CD14-positive monocyte (primary cell): ENCODE measurements at regions of chr6 and their contacts with region 1.

Region 1: GRCh38 chr6:31597006-31597405 is 4.2 kb upstream of the NCR3 start:
- DNase-seq: peak; percentile 55 to 66 (median 55)
- H3K4me3 ChIP-seq: no peak overlapping the region
- H3K4me3 Mint-ChIP-seq: no peak overlapping the region
- H3K27ac ChIP-seq: no peak overlapping the region
- H3K27ac Mint-ChIP-seq: peak overlapping the region in 1 of 7 donors; percentile 87
- H3K4me1 ChIP-seq: peaks cover 13 to 32% of the 10 kb centered on the region in 2 donors
- H3K4me1 Mint-ChIP-seq: peaks cover 33% of the 10 kb centered on the region
- H3K27me3 ChIP-seq: no peaks in the 10 kb centered on the region
- H3K27me3 Mint-ChIP-seq: peaks cover 0 to 7% (median under 1%) of the 10 kb centered on the region in 3 donors
- CTCF ChIP-seq: peak; percentile 74

Region 2: DNA sequence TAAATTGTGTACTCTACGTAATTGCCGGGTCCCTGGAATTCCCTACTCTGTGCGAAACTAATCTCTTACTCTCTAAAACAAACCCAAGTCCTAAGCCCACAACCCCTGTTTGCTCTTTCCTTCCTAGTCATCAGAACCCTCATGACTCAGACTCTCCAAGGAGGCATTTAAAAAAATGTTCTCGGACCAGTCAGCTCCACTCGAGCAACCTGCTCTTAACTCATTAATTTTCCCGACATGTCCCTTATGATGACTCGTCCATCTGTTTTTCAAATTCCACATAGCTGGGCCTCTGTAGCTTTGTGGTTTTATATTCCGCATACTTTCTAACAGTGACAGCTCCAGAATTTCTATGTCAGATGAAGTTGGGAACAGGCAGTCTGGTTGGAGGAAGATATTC is 589.3 kb before region 1 on chr6:
- intact Hi-C with region 1: no loop called
- DNase-seq: no peak
- H3K4me3 ChIP-seq: no peak overlapping the region
- H3K4me3 Mint-ChIP-seq: no peak overlapping the region
- H3K27ac ChIP-seq: no peak overlapping the region
- H3K27ac Mint-ChIP-seq: no peak overlapping the region
- H3K4me1 ChIP-seq: no peaks in the 10 kb centered on the region
- H3K4me1 Mint-ChIP-seq: no peaks in the 10 kb centered on the region
- H3K27me3 ChIP-seq: no peaks in the 10 kb centered on the region
- H3K27me3 Mint-ChIP-seq: peaks cover 2 to 14% (median 9%) of the 10 kb centered on the region in 3 donors
- CTCF ChIP-seq: no peak

Region 3: GRCh38 chr6:31403283-31403989 is 193.6 kb before region 1 on chr6 and contains the start of gene MICA:
- intact Hi-C with region 1: no loop called
- DNase-seq: peak; percentile 57 to 85 (median 85)
- H3K4me3 ChIP-seq: peak within 1 kb of the TSS; percentile 43 to 98 (median 57)
- H3K4me3 Mint-ChIP-seq: peak within 1 kb of the TSS; percentile 98 to 99
- H3K27ac ChIP-seq: peak within 1 kb of the TSS; percentile 7 to 54
- H3K27ac Mint-ChIP-seq: peak within 1 kb of the TSS; percentile 77 to 98 (median 87)
- H3K4me1 ChIP-seq: peaks cover 40 to 68% of the 10 kb centered on the region in 2 donors
- H3K4me1 Mint-ChIP-seq: peaks cover 73% of the 10 kb centered on the region
- H3K27me3 ChIP-seq: no peaks in the 10 kb centered on the region
- H3K27me3 Mint-ChIP-seq: peaks cover 0 to 5% (median 3%) of the 10 kb centered on the region in 3 donors
- CTCF ChIP-seq: peak; percentile 14
- polyA plus RNA-seq, gene MICA: 5.6 to 16.5 (median 6.9) TPM

Region 4: DNA sequence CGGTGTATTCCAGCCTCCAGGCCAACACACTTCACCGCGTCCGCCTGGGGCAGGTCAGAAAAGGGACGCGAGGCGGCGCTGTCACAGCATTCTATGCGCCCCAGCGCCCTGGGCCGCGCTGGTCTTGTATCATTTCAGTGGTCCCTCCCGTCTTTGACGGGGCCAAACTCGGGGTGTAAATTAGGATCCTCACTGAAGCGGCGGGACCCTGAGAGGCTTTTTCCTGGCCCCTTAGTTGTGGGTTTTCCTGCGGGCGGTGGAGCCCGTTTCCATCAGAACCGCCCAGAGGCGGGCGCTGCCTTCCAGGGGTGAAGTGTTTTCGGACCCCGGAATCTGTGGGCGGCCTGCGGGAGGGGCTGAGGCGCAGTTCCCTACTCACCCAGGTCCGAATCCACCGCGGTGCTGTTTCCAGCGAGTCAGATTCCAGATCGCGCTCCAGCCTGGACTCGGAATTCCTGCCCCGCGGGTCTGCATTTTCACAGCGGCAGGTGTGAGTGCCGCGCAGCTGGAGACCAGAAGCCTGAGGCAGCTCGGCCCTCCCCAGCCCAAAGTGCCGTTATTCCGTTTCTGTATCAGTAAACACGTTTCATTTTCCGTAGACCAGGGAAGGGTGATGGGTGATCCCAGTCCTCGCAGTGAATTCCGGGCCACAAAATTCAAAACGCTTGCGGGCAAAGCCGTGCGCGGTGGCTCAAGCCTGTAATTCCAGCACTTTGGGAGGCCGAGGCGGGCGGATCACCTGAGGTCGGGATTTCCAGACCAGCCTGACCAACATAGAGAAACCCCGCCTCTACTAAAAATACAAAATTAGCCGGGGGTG is 102.9 kb before region 1 on chr6:
- intact Hi-C with region 1: loop called in 1 of 2 experiments (anchors 5 kb)
- DNase-seq: peak; percentile 68 to 77 (median 77)
- H3K4me3 ChIP-seq: peak overlapping the region; percentile 81 to 98 (median 87)
- H3K4me3 Mint-ChIP-seq: peak overlapping the region; percentile 94 to 95
- H3K27ac ChIP-seq: peak overlapping the region; percentile 82 to 83
- H3K27ac Mint-ChIP-seq: peak overlapping the region; percentile 87 to 96 (median 94)
- H3K4me1 ChIP-seq: peaks cover 51 to 62% of the 10 kb centered on the region in 2 donors
- H3K4me1 Mint-ChIP-seq: peaks cover 56% of the 10 kb centered on the region
- H3K27me3 ChIP-seq: no peaks in the 10 kb centered on the region
- H3K27me3 Mint-ChIP-seq: peaks cover 0 to 2% (median 0%) of the 10 kb centered on the region in 3 donors
- CTCF ChIP-seq: peak; percentile 92

Region 5: DNA sequence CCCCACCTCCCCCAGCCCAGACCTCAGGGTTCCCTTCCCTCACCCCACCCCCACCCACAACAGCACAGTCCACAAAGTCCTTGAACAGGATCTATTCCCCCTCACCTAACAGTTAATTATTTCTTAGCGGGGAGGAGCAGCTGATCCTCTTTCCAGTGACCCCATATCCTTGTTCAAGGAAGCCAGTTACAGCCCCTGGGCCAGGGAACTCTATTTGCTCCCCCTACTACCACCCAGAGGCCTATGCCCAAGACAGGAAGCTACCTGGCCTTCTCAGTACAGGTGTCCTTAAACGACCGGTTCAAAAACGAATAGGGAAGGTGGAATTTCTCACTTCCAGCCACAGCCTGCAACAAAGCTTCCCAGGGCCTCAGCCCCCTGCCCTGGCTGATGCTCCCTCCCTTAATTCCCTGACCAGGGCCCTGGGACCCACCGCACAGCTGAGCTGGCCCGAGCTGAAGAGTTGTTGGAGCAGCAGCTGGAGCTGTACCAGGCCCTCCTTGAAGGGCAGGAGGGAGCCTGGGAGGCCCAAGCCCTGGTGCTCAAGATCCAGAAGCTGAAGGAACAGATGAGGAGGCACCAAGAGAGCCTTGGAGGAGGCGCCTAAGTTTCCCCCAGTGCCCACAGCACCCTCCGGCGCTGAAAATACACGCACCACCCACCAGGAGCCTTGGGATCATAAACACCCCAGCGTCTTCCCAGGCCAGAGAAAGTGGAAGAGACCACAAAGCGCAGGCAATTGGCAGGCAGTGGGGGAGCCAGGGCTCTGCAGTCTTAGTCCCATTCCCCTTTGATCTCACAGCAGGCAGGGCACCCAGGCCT is 67.5 kb before region 1 on chr6:
- intact Hi-C with region 1: no loop called
- DNase-seq: no peak
- H3K4me3 ChIP-seq: no peak overlapping the region
- H3K4me3 Mint-ChIP-seq: no peak overlapping the region
- H3K27ac ChIP-seq: no peak overlapping the region
- H3K27ac Mint-ChIP-seq: peak overlapping the region; percentile 3 to 69 (median 54)
- H3K4me1 ChIP-seq: no peaks in the 10 kb centered on the region
- H3K4me1 Mint-ChIP-seq: peaks cover 3% of the 10 kb centered on the region
- H3K27me3 ChIP-seq: no peaks in the 10 kb centered on the region
- H3K27me3 Mint-ChIP-seq: peaks cover 0 to 2% (median 1%) of the 10 kb centered on the region in 3 donors
- CTCF ChIP-seq: no peak

Region 6: DNA sequence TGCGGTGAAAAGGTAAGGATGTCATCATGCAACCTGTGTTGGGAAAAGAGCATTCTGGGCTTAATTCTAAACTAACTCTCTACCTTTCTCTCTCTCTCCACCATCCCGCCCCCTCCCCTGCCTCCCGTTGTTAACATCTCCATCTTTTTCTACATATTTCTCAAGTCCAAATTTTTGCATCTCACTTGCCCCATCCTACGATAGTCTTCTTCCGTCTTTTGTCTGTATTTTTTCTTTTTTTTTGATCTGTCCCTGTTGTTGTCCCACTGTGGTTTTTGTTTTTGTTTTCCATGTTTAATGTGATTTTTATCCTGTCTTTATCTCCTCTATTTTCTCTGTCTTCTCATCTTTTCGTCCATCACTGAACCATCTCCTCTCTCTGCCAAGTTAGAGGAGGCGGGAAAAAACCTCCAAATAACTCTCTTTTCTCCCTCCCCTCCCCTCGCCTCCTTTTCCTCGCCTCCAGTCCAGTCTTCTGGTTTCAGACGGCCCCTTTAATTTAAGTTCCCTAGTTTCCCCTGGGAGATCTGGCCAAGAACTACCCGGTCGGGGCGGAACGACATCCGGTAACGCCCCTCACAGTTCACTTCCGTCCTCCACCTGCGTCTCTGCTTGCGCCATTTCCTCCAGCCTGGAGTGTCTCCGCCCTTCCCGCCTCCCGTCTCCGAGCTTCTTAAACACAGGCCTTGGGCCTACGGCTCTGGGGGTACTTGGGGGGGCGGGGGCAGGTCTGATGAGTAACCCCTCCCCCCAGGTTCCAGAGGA is 49.9 kb before region 1 on chr6 and contains the start of gene NFKBIL1:
- intact Hi-C with region 1: loop called (anchors 1 to 2 kb)
- DNase-seq: peak; percentile 87 to 95 (median 92)
- H3K4me3 ChIP-seq: peak within 1 kb of the TSS; percentile 33 to 71 (median 34)
- H3K4me3 Mint-ChIP-seq: peak within 1 kb of the TSS; percentile 65 to 86
- H3K27ac ChIP-seq: peak within 1 kb of the TSS; percentile 54 to 68
- H3K27ac Mint-ChIP-seq: peak within 1 kb of the TSS; percentile 86 to 96 (median 92)
- H3K4me1 ChIP-seq: peaks cover 36 to 45% of the 10 kb centered on the region in 2 donors
- H3K4me1 Mint-ChIP-seq: peaks cover 45% of the 10 kb centered on the region
- H3K27me3 ChIP-seq: no peaks in the 10 kb centered on the region
- H3K27me3 Mint-ChIP-seq: no peaks in the 10 kb centered on the region
- CTCF ChIP-seq: peak; percentile 52
- polyA plus RNA-seq, gene NFKBIL1: 7.7 to 10.3 (median 8.0) TPM

Region 7: GRCh38 chr6:31580807-31581433 is 16.1 kb before region 1 on chr6:
- intact Hi-C with region 1: loop called in 1 of 2 experiments (anchors 2 kb)
- DNase-seq: peak; percentile 77 to 83 (median 79)
- H3K4me3 ChIP-seq: peak overlapping the region; percentile 83 to 94 (median 84)
- H3K4me3 Mint-ChIP-seq: peak overlapping the region; percentile 95 to 99
- H3K27ac ChIP-seq: peak overlapping the region; percentile 66 to 75
- H3K27ac Mint-ChIP-seq: peak overlapping the region; percentile 86 to 96 (median 93)
- H3K4me1 ChIP-seq: peaks cover 83 to 94% of the 10 kb centered on the region in 2 donors
- H3K4me1 Mint-ChIP-seq: peaks cover 88% of the 10 kb centered on the region
- H3K27me3 ChIP-seq: no peaks in the 10 kb centered on the region
- H3K27me3 Mint-ChIP-seq: peaks cover 0 to 1% (median 1%) of the 10 kb centered on the region in 3 donors
- CTCF ChIP-seq: peak; percentile 97